CD4-positive, alpha-beta memory T cell (primary cell): ENCODE measurements at regions of chr4 and their contacts with region 1.

Region 1: DNA sequence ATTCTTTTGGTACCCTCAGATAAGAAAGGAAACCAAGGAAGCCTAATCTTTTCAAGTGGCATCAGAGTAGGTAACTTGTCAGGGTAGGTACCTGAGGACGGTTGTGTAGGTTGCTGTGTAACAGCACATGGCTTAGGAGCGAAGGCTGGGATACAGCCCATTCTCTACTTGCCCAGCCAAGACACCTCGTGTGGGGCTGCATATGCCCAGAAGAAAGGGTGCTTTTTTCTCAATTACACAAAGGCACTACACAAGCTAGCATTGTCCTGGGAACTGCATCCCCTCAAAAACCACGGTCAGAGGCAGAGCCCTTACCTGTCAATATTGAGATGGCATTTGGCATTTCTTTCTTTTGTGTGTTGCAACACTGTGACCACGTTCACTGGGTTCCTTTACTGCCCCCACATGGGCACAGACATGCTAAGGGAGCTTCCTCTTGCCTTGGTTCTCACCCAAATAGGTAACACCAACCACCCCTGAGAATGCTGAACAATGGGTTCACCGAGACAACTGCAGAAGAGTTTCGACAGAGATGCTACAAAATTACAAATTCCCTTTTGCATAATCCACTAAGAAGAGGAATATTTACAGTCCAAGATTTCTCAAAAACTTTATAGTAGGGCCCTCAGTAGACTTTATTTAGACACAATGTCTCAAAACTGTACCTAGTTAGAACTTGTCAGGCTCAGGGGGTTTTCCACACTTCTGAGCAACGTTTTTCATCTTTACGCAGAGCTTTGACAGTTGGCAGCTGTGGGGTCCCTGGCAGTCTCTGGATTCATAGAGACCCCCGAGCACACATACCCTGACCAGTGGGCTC is 35.8 kb upstream of the TNIP3 start:
- DNase-seq: peak in 2 of 5 donors; percentile 17 to 42
- H3K4me3 ChIP-seq: no peak overlapping the region
- H3K4me3 Mint-ChIP-seq: peak overlapping the region; percentile 54 to 83 (median 68)
- H3K27ac ChIP-seq: no peak overlapping the region
- H3K27ac Mint-ChIP-seq: peak overlapping the region; percentile 5 to 75 (median 59)
- H3K4me1 ChIP-seq: peaks cover 25% of the 10 kb centered on the region
- H3K4me1 Mint-ChIP-seq: peaks cover 18 to 32% (median 24%) of the 10 kb centered on the region in 4 donors
- H3K27me3 ChIP-seq: no peaks in the 10 kb centered on the region
- H3K27me3 Mint-ChIP-seq: no peaks in the 10 kb centered on the region

Region 2: DNA sequence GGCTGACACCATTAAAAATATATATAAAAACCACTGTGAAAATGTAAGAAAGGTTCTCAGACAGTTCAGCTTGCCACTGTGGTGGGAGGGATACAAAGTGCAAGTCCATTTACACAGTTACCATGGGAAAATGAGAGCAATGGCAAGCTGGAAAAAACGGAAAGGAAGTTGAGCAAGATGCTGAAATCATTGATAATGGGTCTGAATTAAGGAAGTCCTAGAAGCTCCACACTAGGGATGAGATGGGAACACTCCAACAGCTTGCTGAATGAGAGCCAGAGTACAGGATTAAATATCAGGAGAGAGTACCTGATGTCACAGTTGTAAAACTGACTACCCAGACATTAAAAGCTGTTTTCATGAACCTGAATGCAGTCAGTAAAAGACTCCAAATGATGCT is 496.0 kb before region 1 on chr4:
- CTCF ChIA-PET with region 1: no interaction called
- POLR2A ChIA-PET with region 1: no interaction called
- intact Hi-C with region 1: no loop called
- DNase-seq: no peak
- H3K4me3 ChIP-seq: no peak overlapping the region
- H3K4me3 Mint-ChIP-seq: no peak overlapping the region
- H3K27ac ChIP-seq: no peak overlapping the region
- H3K27ac Mint-ChIP-seq: no peak overlapping the region
- H3K4me1 ChIP-seq: no peaks in the 10 kb centered on the region
- H3K4me1 Mint-ChIP-seq: no peaks in the 10 kb centered on the region
- H3K27me3 ChIP-seq: peaks cover 4% of the 10 kb centered on the region
- H3K27me3 Mint-ChIP-seq: peaks cover 4 to 14% of the 10 kb centered on the region in 2 donors

Region 3: GRCh38 chr4:121182296-121182695 is 17.7 kb before region 1 on chr4:
- CTCF ChIA-PET with region 1: interaction called, 39 read pairs
- POLR2A ChIA-PET with region 1: interaction called, 3 read pairs
- intact Hi-C with region 1: no loop called
- DNase-seq: peak; percentile 42 to 64 (median 57)
- H3K4me3 ChIP-seq: peak overlapping the region; percentile 43 to 62
- H3K4me3 Mint-ChIP-seq: peak overlapping the region; percentile 66 to 96 (median 86)
- H3K27ac ChIP-seq: peak overlapping the region; percentile 87
- H3K27ac Mint-ChIP-seq: peak overlapping the region; percentile 80 to 98 (median 92)
- H3K4me1 ChIP-seq: peaks cover 57% of the 10 kb centered on the region
- H3K4me1 Mint-ChIP-seq: peaks cover 49 to 71% (median 60%) of the 10 kb centered on the region in 4 donors
- H3K27me3 ChIP-seq: no peaks in the 10 kb centered on the region
- H3K27me3 Mint-ChIP-seq: no peaks in the 10 kb centered on the region

Region 4: GRCh38 chr4:121221608-121222007 is 21.7 kb after region 1 on chr4:
- CTCF ChIA-PET with region 1: interaction called, 4 read pairs
- POLR2A ChIA-PET with region 1: no interaction called
- intact Hi-C with region 1: loop called (anchors 2 kb)
- DNase-seq: no peak
- H3K4me3 ChIP-seq: no peak overlapping the region
- H3K4me3 Mint-ChIP-seq: peak overlapping the region in 2 of 8 donors; percentile 4 to 32
- H3K27ac ChIP-seq: no peak overlapping the region
- H3K27ac Mint-ChIP-seq: peak overlapping the region in 4 of 7 donors; percentile 6 to 50 (median 40)
- H3K4me1 ChIP-seq: peaks cover 16% of the 10 kb centered on the region
- H3K4me1 Mint-ChIP-seq: peaks cover 17 to 33% (median 25%) of the 10 kb centered on the region in 4 donors
- H3K27me3 ChIP-seq: no peaks in the 10 kb centered on the region
- H3K27me3 Mint-ChIP-seq: no peaks in the 10 kb centered on the region

Region 5: GRCh38 chr4:121243485-121243884 is 43.5 kb after region 1 on chr4:
- CTCF ChIA-PET with region 1: interaction called, 14 read pairs
- POLR2A ChIA-PET with region 1: interaction called, 6 read pairs
- intact Hi-C with region 1: no loop called
- DNase-seq: peak in 2 of 5 donors; percentile 12 to 21
- H3K4me3 ChIP-seq: peak overlapping the region; percentile 38 to 52
- H3K4me3 Mint-ChIP-seq: peak overlapping the region; percentile 78 to 94 (median 87)
- H3K27ac ChIP-seq: no peak overlapping the region
- H3K27ac Mint-ChIP-seq: peak overlapping the region in 5 of 7 donors; percentile 13 to 79 (median 33)
- H3K4me1 ChIP-seq: peaks cover 5% of the 10 kb centered on the region
- H3K4me1 Mint-ChIP-seq: peaks cover 6 to 18% (median 16%) of the 10 kb centered on the region in 4 donors
- H3K27me3 ChIP-seq: no peaks in the 10 kb centered on the region
- H3K27me3 Mint-ChIP-seq: no peaks in the 10 kb centered on the region

Region 6: DNA sequence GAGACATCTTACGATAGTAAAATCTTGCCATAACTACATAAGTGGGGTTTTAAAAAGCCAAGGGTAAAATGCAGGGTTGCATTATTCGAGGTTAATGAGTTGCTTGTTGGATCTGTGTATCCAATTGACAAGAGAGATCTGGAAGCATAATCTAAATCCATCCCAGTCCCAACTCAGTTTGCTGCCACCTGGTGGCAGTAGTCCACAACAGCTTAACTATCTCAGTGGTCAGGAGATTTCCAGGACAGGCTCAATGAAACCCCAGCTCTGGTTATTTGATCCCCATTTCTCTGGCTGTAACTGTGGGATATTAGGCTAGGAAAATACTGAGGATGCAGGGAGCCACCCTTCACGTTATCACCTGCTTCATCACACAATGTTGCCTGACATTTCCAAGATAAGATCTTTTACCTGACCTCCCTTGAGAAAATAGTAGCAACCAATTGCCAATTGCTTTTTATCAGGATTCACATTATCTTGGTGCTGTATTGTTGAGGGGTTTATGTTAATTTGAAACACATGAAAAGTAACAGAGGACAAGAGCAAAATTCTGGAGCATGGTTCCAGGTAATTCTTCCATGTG is 52.4 kb after region 1 on chr4:
- CTCF ChIA-PET with region 1: interaction called, 10 read pairs
- POLR2A ChIA-PET with region 1: interaction called, 5 read pairs
- intact Hi-C with region 1: no loop called
- DNase-seq: peak in 4 of 5 donors; percentile 33 to 50 (median 44)
- H3K4me3 ChIP-seq: no peak overlapping the region
- H3K4me3 Mint-ChIP-seq: no peak overlapping the region
- H3K27ac ChIP-seq: no peak overlapping the region
- H3K27ac Mint-ChIP-seq: peak overlapping the region in 4 of 7 donors; percentile 14 to 63 (median 47)
- H3K4me1 ChIP-seq: peaks cover 47% of the 10 kb centered on the region
- H3K4me1 Mint-ChIP-seq: peaks cover 37 to 49% (median 43%) of the 10 kb centered on the region in 4 donors
- H3K27me3 ChIP-seq: no peaks in the 10 kb centered on the region
- H3K27me3 Mint-ChIP-seq: no peaks in the 10 kb centered on the region

Region 7: GRCh38 chr4:121307445-121308327 is 107.7 kb after region 1 on chr4:
- CTCF ChIA-PET with region 1: interaction called, 20 read pairs
- POLR2A ChIA-PET with region 1: no interaction called
- intact Hi-C with region 1: no loop called
- DNase-seq: peak; percentile 44 to 53 (median 45)
- H3K4me3 ChIP-seq: no peak overlapping the region
- H3K4me3 Mint-ChIP-seq: peak overlapping the region in 1 of 8 donors; percentile 17
- H3K27ac ChIP-seq: no peak overlapping the region
- H3K27ac Mint-ChIP-seq: peak overlapping the region in 2 of 7 donors; percentile 29 to 73
- H3K4me1 ChIP-seq: peaks cover 6% of the 10 kb centered on the region
- H3K4me1 Mint-ChIP-seq: peaks cover 9 to 15% (median 13%) of the 10 kb centered on the region in 4 donors
- H3K27me3 ChIP-seq: no peaks in the 10 kb centered on the region
- H3K27me3 Mint-ChIP-seq: peaks cover 0 to 3% of the 10 kb centered on the region in 2 donors